Calu3 (cell line): ENCODE measurements at regions of chr18 and their contacts with region 1.

Region 1: DNA sequence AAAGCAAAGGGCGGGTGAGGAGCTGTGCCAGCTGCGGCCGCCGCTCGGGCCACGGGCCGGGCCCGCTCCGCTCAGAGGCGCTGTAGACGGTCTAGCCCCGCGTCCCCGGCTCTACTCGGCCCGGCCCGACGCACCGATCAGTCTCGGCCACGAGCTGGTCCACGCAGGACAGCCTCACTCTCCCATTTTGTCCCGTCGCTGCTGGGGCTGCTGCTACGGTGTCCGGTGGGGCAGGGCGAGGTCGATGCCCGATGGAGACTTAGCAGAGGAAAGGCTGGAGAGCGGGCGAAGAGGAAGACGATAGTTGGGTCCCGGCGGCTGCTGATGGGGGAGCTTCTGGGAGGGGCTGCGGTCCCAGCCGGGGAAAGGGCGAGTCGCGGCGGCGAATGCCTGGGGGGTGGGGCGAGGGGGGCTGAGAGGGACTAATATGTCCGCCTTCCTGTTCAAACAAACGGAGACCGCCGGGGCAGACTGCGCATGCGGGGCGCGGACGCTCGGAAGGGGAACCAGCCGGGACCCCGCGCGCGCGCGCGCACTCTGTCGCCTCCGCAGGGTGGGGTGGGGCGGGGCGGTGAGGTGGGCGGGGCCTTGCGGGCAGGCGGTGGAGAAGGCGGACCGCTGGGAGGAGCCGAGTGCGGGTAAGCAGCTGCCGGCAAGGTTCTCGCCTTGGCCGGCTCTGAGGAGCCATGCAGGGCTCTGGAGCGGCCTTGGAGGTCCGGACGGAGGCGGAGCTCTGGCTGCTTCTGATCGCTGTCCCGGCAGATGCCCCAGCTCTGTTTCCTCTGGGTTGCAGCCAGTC is at the start of gene ROCK1:
- DNase-seq: peak; percentile 97
- H3K4me3 Mint-ChIP-seq: no peak within 1 kb of the TSS
- H3K27ac Mint-ChIP-seq: peak within 1 kb of the TSS; percentile 95
- H3K4me1 Mint-ChIP-seq: peaks cover 8% of the 10 kb centered on the region
- H3K27me3 Mint-ChIP-seq: no peaks in the 10 kb centered on the region
- CTCF ChIP-seq: no peak
- total RNA-seq, gene ROCK1: 50.9 and 51.9 TPM in 2 replicates

Region 2: DNA sequence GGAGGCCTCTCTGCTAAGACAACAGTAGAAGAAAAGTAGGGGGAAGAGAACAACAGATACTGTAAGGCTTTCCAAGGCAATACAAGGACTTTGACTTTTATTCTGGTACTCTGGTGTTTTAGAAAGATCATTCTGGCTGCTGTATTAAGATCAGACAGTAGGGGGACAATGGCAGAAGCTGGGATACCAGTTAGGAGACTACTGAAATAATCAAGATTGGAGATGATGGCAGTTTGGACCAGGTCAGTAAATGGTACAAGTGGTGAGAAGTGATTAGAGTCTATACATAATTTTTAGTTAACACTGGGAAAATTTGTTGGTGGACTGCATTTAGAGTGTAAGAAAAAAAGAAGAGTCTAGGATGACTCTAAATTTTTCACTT is 139.7 kb before region 1 on chr18:
- CTCF ChIA-PET with region 1: no interaction called
- intact Hi-C with region 1: loop called (anchors 5 kb)
- DNase-seq: peak; percentile 24
- H3K4me3 Mint-ChIP-seq: no peak overlapping the region
- H3K27ac Mint-ChIP-seq: peak overlapping the region; percentile 16
- H3K4me1 Mint-ChIP-seq: peaks cover 15% of the 10 kb centered on the region
- H3K27me3 Mint-ChIP-seq: no peaks in the 10 kb centered on the region
- CTCF ChIP-seq: no peak

Region 3: DNA sequence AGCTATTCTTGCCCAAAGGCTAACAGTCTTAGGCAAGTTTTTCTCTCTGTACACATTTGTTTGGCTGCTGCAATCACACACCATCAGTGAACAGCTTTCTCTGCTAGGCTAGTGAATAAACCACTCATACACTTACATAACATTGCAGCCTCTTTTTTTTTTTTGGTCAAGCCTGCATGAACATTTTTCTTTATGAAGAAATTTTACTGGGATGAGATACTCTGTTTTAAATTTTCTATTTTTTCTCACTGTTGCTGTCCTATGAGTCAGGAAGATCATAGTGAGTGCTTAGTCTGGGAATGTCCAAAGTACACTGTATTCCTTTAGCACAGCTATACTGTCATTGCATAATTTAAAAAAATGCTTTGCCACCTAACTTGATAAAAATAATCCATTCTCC is 58.4 kb before region 1 on chr18:
- CTCF ChIA-PET with region 1: no interaction called
- intact Hi-C with region 1: loop called (anchors 5 kb)
- DNase-seq: no peak
- H3K4me3 Mint-ChIP-seq: no peak overlapping the region
- H3K27ac Mint-ChIP-seq: no peak overlapping the region
- H3K4me1 Mint-ChIP-seq: no peaks in the 10 kb centered on the region
- H3K27me3 Mint-ChIP-seq: no peaks in the 10 kb centered on the region
- CTCF ChIP-seq: no peak

Region 4: GRCh38 chr18:21074336-21075323 is 36.9 kb before region 1 on chr18:
- CTCF ChIA-PET with region 1: no interaction called
- intact Hi-C with region 1: loop called (anchors 2 kb)
- DNase-seq: peak; percentile 25
- H3K4me3 Mint-ChIP-seq: peak overlapping the region; percentile 27
- H3K27ac Mint-ChIP-seq: peak overlapping the region; percentile 53
- H3K4me1 Mint-ChIP-seq: peaks cover 58% of the 10 kb centered on the region
- H3K27me3 Mint-ChIP-seq: no peaks in the 10 kb centered on the region
- CTCF ChIP-seq: no peak

Region 5: GRCh38 chr18:21085579-21086166 is 25.9 kb before region 1 on chr18:
- CTCF ChIA-PET with region 1: no interaction called
- intact Hi-C with region 1: loop called (anchors 2 kb)
- DNase-seq: no peak
- H3K4me3 Mint-ChIP-seq: no peak overlapping the region
- H3K27ac Mint-ChIP-seq: no peak overlapping the region
- H3K4me1 Mint-ChIP-seq: peaks cover 16% of the 10 kb centered on the region
- H3K27me3 Mint-ChIP-seq: no peaks in the 10 kb centered on the region
- CTCF ChIP-seq: no peak

Region 6: DNA sequence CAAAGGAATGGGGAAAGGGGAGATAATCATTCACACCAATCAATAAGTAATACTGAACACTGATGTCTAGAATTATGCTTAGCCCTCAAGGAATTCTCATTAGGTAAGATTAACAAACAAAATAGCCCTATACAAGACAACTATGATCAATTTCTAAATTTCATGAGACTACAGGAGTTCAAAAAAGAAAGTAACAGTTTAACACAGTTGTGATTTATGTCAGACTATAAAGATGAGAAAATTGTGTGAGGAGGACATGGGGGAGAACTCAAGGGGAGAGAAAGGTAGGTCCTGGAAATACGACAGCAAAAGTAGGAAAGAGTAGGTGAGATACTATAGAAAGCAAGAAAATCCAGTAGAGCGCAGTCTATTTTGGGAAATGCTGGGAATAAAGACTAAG is 14.8 kb before region 1 on chr18:
- CTCF ChIA-PET with region 1: no interaction called
- intact Hi-C with region 1: no loop called
- DNase-seq: no peak
- H3K4me3 Mint-ChIP-seq: no peak overlapping the region
- H3K27ac Mint-ChIP-seq: no peak overlapping the region
- H3K4me1 Mint-ChIP-seq: peaks cover 26% of the 10 kb centered on the region
- H3K27me3 Mint-ChIP-seq: no peaks in the 10 kb centered on the region
- CTCF ChIP-seq: no peak

Region 7: DNA sequence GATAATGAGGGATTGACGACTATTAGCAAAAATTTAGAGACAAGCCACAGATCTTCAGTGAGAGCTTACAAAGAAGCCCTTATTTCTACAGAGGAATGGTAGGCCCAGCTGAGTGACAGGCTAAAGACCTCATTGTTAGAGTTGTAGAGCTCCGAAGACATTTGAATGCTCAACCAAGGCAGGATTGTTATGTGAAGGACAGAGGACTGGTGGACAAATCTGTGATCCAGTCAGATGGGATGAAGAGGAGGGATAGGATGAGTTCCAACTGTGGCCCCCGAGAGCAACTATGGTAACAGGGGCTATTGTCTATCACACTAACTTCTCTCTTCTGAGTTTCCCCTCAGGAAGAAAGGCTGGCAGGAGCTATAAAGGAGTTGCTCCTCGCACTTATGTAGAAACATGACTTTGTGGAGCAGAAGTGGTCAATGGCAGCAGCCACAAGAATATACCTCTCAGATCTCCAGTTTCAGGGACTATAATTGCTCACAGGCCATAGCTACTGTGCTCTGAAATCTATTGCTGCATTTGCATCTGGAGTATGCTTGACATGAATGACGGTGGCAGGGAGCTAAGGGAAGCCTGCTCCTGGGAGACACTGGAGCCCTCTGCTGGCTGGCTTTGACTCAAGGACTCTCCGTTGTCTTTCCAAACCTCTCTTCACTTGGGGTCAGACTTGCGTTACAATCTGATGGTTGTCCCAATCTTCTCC is 80.2 kb after region 1 on chr18:
- CTCF ChIA-PET with region 1: no interaction called
- intact Hi-C with region 1: loop called (anchors 5 kb)
- DNase-seq: peak; percentile 68
- H3K4me3 Mint-ChIP-seq: no peak overlapping the region
- H3K27ac Mint-ChIP-seq: no peak overlapping the region
- H3K4me1 Mint-ChIP-seq: peaks cover 11% of the 10 kb centered on the region
- H3K27me3 Mint-ChIP-seq: no peaks in the 10 kb centered on the region
- CTCF ChIP-seq: peak; percentile 81